Common myeloid progenitor, CD34-positive (primary cell): ENCODE measurements at regions of chr15 and their contacts with region 1.

Region 1: GRCh38 chr15:79339564-79340314 is 28.8 kb downstream of the TMED3 start:
- DNase-seq: peak; percentile 42 to 59 (median 54)
- H3K4me3 ChIP-seq: no peak overlapping the region
- H3K27ac ChIP-seq: no peak overlapping the region
- H3K4me1 ChIP-seq: no peaks in the 10 kb centered on the region
- H3K27me3 ChIP-seq: no peaks in the 10 kb centered on the region

Region 2: DNA sequence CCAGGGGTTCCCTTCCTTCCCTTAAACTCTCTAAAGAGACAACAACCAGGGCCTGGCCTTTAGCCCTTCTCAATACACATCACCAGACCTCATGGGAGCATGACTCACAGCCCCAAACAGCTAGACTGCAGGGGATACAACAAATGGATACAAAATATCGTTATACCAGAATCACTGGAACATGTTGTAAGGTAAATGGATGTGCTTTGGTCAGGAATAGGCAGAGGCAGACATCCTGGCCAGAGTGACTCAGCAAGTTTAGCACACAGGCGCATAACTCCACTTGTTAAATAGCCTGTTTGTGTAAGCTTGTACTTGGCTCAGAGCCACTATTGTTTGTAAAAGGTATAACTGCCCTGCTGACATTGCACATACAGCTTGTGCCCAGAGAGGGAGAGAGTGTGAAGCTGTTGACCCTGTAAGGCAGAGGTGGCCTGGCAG is 10.5 kb before region 1 on chr15:
- CTCF ChIA-PET with region 1: interaction called, 13 read pairs
- POLR2A ChIA-PET with region 1: interaction called, 3 read pairs
- DNase-seq: peak; percentile 15 to 73 (median 51)
- H3K4me3 ChIP-seq: no peak overlapping the region
- H3K27ac ChIP-seq: no peak overlapping the region
- H3K4me1 ChIP-seq: peaks cover 3 to 20% (median 13%) of the 10 kb centered on the region in 4 experiments
- H3K27me3 ChIP-seq: no peaks in the 10 kb centered on the region

Region 3: DNA sequence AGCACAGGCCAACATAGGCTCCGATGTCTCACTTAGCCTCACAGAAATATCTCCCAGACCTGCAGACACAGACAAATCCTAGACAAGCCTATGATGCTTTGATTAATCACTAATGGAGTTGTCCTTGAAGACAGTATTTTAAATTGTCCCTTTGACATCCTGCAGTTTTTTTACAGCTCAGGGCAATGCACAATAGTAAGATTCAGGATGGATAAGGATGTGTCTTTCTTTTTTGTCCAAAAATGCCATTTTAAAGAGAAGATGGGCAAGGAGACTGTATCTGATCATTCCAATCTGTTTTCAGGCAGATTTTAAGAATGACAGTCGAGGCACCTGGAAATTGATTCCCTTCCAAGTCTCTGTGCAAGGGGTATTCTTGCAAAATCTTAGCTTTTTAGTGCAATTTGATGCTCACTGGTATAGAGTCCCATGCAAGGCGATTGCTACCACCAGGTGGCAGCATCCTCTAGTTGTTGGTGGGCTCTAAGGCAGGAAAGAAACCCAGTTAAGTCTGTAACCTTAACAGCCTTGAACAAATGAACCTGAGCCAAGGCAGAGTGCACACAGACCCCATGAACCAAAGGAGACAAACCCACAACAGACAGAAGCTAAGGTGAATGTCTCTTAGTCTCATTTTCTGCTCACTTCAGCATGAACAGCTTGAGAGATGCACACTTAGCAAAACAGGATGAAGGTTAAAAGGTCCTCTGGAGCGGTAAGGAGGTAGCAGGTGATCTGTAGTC is 41.2 kb after region 1 on chr15:
- CTCF ChIA-PET with region 1: interaction called, 14 read pairs
- POLR2A ChIA-PET with region 1: no interaction called
- DNase-seq: peak; percentile 52 to 83 (median 69)
- H3K4me3 ChIP-seq: no peak overlapping the region
- H3K27ac ChIP-seq: no peak overlapping the region
- H3K4me1 ChIP-seq: no peaks in the 10 kb centered on the region
- H3K27me3 ChIP-seq: no peaks in the 10 kb centered on the region